Activated CD4-positive, alpha-beta memory T cell treated with anti-CD3 and anti-CD28 coated beads for 36 hours (primary cell): ENCODE measurements at regions of chr6 and their contacts with region 1.

Region 1: DNA sequence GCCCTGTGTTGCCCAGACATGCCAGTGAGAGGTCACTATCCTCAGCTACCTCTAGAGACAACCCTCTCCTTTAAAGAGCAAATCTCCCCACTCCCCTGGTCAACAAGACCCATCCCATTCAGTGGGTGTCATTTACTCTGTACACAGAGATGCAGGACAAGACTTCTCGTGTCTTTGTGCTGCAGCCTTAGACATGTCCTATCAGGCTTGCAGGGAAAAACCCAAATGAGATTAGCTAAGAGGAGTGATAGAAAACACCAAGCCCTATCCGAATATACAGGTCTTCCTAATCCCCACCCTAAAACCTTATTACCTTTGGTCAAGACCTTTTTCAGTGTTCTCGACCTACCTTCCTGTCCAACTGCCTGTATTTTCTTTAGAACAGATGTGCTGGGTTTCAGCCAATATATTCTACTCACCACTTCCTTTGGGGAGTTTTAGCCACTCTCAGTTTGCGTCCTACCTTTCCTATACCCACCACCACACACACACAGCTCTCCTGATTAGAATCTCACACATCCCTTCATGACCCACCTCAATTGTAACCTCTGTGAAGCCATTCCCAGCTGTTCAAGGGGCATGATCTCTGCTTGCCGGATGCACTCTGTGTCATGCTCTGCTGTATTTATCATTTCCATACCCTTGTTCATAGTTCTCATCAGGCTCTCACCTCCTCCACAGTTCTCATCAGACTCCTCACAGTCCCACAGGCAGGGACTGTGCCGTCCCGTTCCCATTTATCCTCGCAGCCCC is 39.7 kb downstream of the TRAM2 start:
- DNase-seq: no peak
- H3K4me3 Mint-ChIP-seq: no peak overlapping the region
- H3K27ac Mint-ChIP-seq: no peak overlapping the region
- H3K4me1 Mint-ChIP-seq: peaks cover 38% of the 10 kb centered on the region
- H3K27me3 Mint-ChIP-seq: no peaks in the 10 kb centered on the region

Region 2: DNA sequence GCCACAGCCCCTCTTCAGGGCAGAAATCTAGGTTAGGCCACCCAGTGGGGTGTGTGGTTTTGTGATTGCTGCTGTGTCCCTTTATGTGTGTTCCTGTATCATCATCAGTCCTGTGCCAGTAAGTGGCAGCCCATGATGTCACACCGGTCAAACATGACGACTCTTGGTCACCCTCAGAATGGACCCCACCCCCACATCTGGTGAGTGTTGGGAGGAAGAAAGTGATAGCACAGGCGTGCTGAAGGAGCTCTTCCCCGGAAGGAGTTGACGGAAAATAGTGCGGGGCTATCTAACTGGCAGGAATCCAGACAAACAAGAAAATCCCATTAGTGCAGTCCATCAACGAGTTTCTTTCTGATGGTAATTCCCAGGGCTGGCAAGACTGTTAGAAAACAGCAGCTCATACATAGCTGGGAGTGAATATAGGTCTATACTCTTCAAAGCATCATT is 384.4 kb before region 1 on chr6:
- CTCF ChIA-PET with region 1: no interaction called
- POLR2A ChIA-PET with region 1: no interaction called
- intact Hi-C with region 1: no loop called
- DNase-seq: peak; percentile 34
- H3K4me3 Mint-ChIP-seq: no peak overlapping the region
- H3K27ac Mint-ChIP-seq: no peak overlapping the region
- H3K4me1 Mint-ChIP-seq: peaks cover 30% of the 10 kb centered on the region
- H3K27me3 Mint-ChIP-seq: peaks cover 20% of the 10 kb centered on the region

Region 3: GRCh38 chr6:52517502-52518278 is 19.5 kb before region 1 on chr6:
- CTCF ChIA-PET with region 1: no interaction called
- POLR2A ChIA-PET with region 1: no interaction called
- intact Hi-C with region 1: loop called (anchors 2 kb)
- DNase-seq: peak; percentile 73
- H3K4me3 Mint-ChIP-seq: no peak overlapping the region
- H3K27ac Mint-ChIP-seq: no peak overlapping the region
- H3K4me1 Mint-ChIP-seq: peaks cover 6% of the 10 kb centered on the region
- H3K27me3 Mint-ChIP-seq: no peaks in the 10 kb centered on the region

Region 4: GRCh38 chr6:52551401-52552277 is 14.5 kb after region 1 on chr6:
- CTCF ChIA-PET with region 1: no interaction called
- POLR2A ChIA-PET with region 1: no interaction called
- intact Hi-C with region 1: no loop called
- DNase-seq: no peak
- H3K4me3 Mint-ChIP-seq: no peak overlapping the region
- H3K27ac Mint-ChIP-seq: no peak overlapping the region
- H3K4me1 Mint-ChIP-seq: peaks cover 9% of the 10 kb centered on the region
- H3K27me3 Mint-ChIP-seq: no peaks in the 10 kb centered on the region

Region 5: GRCh38 chr6:52759085-52759484 is 221.9 kb after region 1 on chr6:
- CTCF ChIA-PET with region 1: no interaction called
- POLR2A ChIA-PET with region 1: no interaction called
- intact Hi-C with region 1: no loop called
- DNase-seq: no peak
- H3K4me3 Mint-ChIP-seq: no peak overlapping the region
- H3K27ac Mint-ChIP-seq: no peak overlapping the region
- H3K4me1 Mint-ChIP-seq: no peaks in the 10 kb centered on the region
- H3K27me3 Mint-ChIP-seq: peaks cover 10% of the 10 kb centered on the region